GM18951 (cell line): ENCODE measurements at regions of chr18 and their contacts with region 1.

Region 1: DNA sequence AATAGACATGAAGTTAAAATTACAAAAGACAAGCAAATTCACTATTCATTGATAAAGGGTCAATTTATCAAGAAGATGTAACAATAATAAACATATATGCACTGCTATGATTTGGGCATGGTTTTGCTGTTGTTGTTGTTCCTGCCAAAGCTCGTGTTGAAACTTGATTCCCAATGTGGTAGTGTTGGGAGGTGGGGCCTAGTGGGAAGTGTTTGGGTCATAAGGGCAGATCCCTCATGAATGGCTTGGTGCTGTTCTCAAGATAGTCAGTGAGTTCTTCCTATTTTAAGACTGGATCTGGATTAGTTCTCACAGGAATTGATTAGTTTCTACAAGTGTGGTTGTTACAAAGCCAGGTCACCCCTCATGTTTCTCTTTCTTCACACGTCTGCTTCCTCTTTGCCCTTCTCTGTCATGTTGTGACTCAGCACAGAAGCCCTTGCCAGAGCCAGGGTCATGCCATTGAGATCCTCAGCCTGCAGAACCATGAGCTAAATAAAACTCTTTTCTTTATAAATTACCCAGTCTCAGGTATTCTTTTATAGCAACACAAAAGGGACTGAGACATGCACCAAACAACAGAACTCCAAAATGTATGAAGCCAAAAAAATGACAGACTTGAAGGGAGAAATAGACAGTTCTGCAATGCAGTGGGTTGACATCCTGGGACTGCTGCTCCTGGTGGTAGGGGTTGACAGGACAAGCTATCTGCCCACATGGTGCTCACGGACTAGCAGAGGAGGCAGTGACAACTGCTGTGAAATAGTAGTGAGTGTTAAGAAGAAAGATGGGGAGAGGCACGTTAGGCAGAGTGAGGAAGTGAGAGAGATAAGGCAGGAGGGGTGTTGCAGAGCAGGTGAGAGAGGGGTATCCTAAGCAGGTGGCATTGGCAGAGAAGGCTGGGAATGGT is 18.6 kb upstream of the SKA1 start:
- POLR2A ChIP-seq: no peak

Region 2: DNA sequence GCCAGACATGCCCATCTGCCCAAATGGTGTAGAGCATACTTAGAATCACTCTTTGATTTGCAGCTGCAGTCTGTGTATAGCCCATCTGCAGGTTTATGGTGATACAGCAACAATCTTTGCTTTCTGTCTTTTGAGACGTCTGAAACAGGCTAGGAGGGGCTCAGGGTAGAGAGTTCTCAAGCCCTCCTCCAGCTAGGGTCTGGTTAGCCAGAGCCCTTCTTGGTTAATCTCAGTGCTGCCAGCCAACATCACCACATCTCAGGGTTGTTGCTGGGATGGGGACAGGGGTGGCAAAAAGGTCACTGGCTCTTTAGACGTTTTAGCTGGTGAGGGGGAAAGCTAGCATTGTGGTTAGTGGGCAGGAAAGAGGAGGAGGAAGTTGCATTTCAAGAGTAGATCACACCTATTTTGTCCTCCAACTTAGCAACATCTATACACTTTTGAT is 406.3 kb before region 1 on chr18:
- in situ Hi-C with region 1: no loop called
- POLR2A ChIP-seq: no peak

Region 3: DNA sequence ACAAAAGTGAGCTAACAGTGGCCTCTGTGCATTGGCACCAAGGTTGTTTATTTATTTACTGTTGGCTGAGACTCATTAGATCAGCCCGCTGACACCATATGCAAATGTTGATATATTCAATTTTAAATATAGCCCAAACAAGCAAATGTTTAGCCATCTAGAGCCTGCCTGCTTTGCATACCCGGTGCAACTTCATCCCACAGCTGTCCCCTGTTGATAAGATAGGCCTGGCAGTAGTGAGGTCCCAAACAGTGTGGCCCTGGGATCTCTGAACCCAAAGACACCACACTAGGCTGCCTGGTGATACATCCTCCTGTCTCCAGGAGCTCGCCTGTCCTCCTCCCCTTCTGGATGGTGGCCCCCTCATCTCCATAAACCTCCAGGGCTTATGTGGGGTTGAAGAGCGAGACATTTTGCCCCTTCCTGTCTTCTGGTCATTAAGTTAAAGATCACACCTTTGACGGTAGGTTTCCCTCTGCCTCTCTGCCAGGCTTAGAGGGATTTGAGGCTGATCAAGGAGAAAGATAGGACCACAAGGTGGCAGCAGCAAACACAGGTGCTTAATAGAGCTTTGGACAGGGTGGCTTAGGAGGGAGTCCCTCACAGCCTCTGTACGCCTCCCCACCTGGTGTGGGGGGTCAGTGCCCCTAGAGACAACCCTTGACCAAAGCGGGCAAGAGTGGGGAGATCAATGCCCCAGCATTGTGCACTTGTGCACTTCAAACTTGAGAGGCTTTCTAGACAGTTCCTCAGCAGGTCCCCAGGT is 137.7 kb before region 1 on chr18:
- in situ Hi-C with region 1: loop called (anchors 10 kb)
- POLR2A ChIP-seq: no peak

Region 4: DNA sequence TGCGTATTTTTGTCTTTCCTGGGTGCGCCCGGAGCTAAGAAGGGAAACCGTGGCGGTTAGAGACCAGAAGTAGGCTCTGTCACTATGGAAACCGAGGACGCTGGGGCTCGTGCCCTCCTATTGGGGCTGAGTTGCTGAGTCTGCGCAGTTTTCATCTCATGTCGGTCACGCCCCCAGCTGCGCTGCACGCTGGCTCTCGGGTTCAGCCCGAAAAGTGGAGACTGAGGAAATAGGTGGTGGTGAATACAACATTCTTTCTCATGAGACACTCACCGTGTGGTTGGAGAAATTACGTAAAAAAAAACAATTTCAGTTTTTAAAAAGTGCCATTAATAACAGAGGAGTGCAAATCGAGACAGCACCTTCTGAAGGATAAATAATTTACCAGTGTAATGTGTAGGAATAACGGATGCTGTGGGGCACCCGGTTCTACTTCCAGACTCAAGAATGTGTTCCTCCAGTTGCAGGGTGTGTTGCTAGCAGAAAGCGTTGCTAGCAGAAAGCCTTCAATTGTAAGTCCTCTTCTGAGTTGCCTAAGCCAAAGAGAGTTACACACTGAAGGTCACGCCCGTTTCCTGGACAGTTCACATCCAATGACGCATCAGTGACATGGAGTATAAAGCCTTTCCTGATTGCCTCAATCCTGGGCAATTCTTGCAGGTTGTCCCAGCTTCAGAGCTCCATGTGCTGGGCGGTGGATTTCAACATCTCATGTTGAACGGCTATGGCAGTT is 48.4 kb before region 1 on chr18:
- in situ Hi-C with region 1: loop called (anchors 10 kb)
- POLR2A ChIP-seq: no peak

Region 5: DNA sequence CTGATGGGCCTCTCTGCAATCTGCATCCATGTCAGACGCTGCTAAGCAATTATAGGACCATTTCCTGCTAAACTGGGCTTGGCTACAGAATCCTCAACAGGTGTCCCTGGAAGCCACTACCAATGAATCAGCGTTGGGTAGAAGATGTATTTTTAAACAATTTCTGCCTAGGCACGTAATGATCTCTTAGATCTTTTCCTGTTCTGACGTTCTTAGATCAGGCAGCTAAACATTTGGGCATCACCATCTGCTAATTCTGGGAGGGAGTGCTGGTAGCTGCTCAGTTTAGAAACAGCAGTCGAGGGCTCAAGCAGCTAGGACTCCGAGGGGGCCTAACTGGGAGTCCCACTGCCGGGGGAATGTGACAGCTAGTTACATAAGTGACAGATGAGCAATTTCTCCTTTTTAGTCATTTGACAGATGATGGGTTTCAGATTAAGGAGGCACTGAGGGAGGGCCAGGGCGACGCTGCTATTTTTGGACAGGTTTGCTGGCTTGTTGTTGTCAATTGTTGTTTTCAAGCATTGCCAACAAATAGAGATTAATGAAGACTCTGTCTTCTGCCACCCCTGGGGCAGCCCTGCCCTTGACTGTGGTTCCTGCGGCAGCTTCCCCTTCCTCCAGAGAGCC is 370.8 kb after region 1 on chr18:
- in situ Hi-C with region 1: no loop called
- POLR2A ChIP-seq: no peak

Region 6: GRCh38 chr18:51028201-51028805 is 672.0 kb after region 1 on chr18:
- in situ Hi-C with region 1: no loop called
- POLR2A ChIP-seq: no peak